T-cell (primary cell): ENCODE measurements at regions of chr17 and their contacts with region 1.

Region 1: DNA sequence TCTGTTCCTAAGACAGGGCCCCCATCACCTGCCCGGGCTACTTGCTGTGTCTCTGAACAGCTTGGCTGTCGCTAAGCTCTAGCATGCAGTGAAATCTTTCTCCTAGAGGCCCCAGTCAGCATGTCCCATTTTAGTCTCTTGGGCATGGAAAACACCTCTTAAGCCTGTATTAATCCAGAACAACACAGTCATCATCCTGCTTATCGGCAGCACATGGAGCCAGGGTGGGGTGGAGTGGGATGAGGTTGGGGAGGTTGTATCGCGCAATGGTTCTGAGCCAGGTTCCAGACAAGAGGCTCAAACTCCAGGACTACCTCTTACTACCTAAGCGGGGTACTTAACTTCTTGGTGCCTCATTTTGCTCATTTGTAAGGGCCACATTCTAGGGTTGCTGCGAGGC is 7.8 kb downstream of the ST6GALNAC2 start:
- DNase-seq: no peak
- ATAC-seq: no peak
- H3K4me3 ChIP-seq: no peak overlapping the region
- H3K4me3 Mint-ChIP-seq: no peak overlapping the region
- H3K27ac ChIP-seq: no peak overlapping the region
- H3K27ac Mint-ChIP-seq: no peak overlapping the region
- H3K4me1 ChIP-seq: no peaks in the 10 kb centered on the region
- H3K4me1 Mint-ChIP-seq: peaks cover 0 to 2% (median 0%) of the 10 kb centered on the region in 3 donors
- H3K27me3 ChIP-seq: peaks cover 0 to 2% of the 10 kb centered on the region in 2 experiments
- H3K27me3 Mint-ChIP-seq: peaks cover 4 to 5% of the 10 kb centered on the region in 2 donors

Region 2: DNA sequence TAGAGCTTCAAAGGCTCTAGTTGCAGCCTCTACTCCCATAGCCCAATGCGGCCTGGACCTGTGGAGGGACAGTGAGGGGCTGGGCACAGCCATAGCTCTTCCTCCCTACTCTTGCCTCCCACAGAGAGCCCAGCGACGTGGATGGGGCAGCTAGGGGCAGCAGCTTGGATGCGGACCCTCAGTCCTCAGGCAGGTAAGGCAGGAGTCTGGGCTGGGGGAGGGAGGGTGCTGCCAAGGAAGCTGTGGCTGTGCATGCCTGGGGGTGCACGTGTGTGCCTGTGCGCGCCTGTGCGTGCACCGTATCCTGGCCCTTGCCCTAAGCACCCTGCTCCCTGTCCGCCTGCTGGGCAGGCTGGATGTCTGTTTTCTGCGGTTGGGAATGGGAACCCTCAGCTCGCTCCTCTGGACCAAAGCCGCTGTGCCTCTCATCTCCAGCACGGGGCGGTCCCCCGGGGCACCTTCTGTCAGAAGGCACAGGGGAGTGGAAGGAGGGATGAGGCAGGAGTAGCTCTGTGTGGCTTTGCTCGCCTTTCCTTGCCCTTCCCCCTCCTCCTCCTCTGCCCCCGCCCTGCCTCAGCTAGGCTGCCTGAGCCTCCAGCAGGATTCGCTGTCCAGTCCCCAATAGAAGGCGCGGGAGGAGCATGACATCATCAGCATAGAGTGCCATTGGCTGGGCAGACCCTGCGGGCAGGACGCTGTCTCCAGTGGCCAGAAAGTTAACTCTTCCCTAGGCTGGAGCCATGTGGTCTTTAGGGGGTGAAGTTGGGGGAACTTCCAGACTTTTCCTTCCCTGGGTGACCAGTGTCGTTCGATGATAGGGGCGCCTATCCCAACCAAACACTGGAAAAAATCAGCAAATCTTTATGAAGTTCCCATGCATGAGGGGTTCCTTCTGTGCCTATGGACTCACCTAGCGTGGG is 37.2 kb before region 1 on chr17:
- CTCF ChIA-PET with region 1: no interaction called
- POLR2A ChIA-PET with region 1: no interaction called
- DNase-seq: peak in 1 of 35 experiments; percentile 28
- ATAC-seq: peak in 2 of 4 experiments; percentile 25 to 50
- H3K4me3 ChIP-seq: no peak overlapping the region
- H3K4me3 Mint-ChIP-seq: no peak overlapping the region
- H3K27ac ChIP-seq: no peak overlapping the region
- H3K27ac Mint-ChIP-seq: no peak overlapping the region
- H3K4me1 ChIP-seq: peaks cover 0 to 14% of the 10 kb centered on the region in 2 experiments
- H3K4me1 Mint-ChIP-seq: peaks cover 3 to 11% (median 11%) of the 10 kb centered on the region in 3 donors
- H3K27me3 ChIP-seq: peaks cover 4 to 80% of the 10 kb centered on the region in 2 experiments
- H3K27me3 Mint-ChIP-seq: peaks cover 23 to 58% of the 10 kb centered on the region in 2 donors

Region 3: GRCh38 chr17:76599694-76600478 is 22.0 kb after region 1 on chr17:
- CTCF ChIA-PET with region 1: interaction called in 1 of 2 experiments, 12 read pairs
- POLR2A ChIA-PET with region 1: no interaction called
- DNase-seq: no peak
- ATAC-seq: no peak
- H3K4me3 ChIP-seq: no peak overlapping the region
- H3K4me3 Mint-ChIP-seq: no peak overlapping the region
- H3K27ac ChIP-seq: no peak overlapping the region
- H3K27ac Mint-ChIP-seq: no peak overlapping the region
- H3K4me1 ChIP-seq: peaks cover 6 to 16% of the 10 kb centered on the region in 2 experiments
- H3K4me1 Mint-ChIP-seq: peaks cover 17 to 20% (median 18%) of the 10 kb centered on the region in 3 donors
- H3K27me3 ChIP-seq: peaks cover 0 to 41% of the 10 kb centered on the region in 2 experiments
- H3K27me3 Mint-ChIP-seq: peaks cover 0 to 12% of the 10 kb centered on the region in 2 donors

Region 4: GRCh38 chr17:76643553-76644148 is 65.8 kb after region 1 on chr17 and contains the start of gene ST6GALNAC1:
- CTCF ChIA-PET with region 1: no interaction called
- POLR2A ChIA-PET with region 1: no interaction called
- DNase-seq: peak in 32 of 35 experiments; percentile 4 to 65 (median 30)
- ATAC-seq: peak; percentile 87 to 99 (median 94)
- H3K4me3 ChIP-seq: peak within 1 kb of the TSS; percentile 30 to 64
- H3K4me3 Mint-ChIP-seq: peak within 1 kb of the TSS; percentile 71 to 85 (median 81)
- H3K27ac ChIP-seq: peak within 1 kb of the TSS; percentile 10
- H3K27ac Mint-ChIP-seq: peak within 1 kb of the TSS; percentile 87 to 90
- H3K4me1 ChIP-seq: peaks cover 14 to 22% of the 10 kb centered on the region in 2 experiments
- H3K4me1 Mint-ChIP-seq: peaks cover 28 to 48% (median 43%) of the 10 kb centered on the region in 3 donors
- H3K27me3 ChIP-seq: peaks cover 0 to 5% of the 10 kb centered on the region in 2 experiments
- H3K27me3 Mint-ChIP-seq: no peaks in the 10 kb centered on the region
- total RNA-seq, gene ST6GALNAC1: 2.6 to 20.5 (median 6.6) TPM